GM10248 (cell line): ENCODE measurements at regions of chr5 and their contacts with region 1.

Region 1: GRCh38 chr5:80308526-80308925 is 11.3 kb upstream of the SPZ1 start:
- DNase-seq: no peak
- CTCF ChIP-seq: no peak

Region 2: DNA sequence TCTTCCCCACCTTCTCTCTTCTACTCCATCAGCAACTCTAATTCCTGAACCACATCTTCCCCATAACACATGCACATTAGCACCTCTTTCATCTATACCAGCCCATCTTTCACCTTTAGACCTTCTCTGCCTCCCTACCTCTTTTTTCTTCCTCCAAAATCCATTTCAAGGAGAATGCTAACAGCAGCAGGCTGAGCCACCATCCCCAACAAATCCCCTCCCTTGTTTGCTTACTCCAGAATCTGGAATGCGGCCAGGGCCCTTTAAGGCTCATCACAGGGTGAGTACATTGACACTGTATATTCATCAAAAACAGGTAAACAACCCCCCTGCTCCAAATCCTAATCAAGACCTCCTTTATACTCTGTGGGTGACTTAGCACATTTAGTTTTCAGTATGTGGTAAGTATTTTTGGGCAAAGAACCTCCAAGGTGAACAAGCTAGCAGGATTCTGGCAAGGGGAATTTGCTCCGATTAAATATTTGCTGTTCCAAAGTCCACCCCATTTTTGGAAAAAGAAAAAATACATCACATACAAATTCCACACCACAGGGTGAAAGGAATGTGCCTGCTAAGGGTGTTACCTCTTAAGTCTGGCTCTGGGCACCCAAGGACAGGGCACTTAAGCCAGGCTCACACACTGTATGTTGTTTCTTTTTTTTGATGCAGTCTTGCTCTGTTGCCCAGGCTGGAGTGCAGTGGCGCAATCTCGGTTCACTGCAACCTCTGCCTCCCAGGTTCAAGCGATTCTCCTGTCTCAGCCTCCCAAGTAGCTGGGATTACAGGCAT is 124.1 kb before region 1 on chr5:
- CTCF ChIA-PET with region 1: no interaction called
- POLR2A ChIA-PET with region 1: no interaction called
- DNase-seq: no peak
- CTCF ChIP-seq: no peak

Region 3: DNA sequence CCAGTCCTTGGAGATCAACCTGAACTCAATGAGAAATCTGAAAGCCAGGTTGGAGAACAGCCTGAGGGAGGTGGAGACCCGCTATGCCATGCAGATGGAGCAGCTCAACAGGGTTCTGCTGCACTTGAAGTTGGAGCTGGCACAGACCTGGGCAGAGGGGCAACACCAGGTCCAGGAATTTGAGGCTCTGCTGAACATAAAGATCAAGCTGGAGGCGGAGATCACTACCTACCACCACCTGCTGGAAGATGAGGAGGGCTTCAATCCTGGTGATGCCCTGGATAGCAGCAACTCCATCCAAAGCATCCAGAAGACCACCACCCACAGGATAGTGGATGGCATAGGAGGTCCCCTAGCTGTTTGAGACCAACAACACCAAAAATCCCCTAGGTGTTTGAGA is 19.2 kb before region 1 on chr5:
- CTCF ChIA-PET with region 1: interaction called, 12 read pairs
- POLR2A ChIA-PET with region 1: no interaction called
- DNase-seq: no peak
- CTCF ChIP-seq: no peak